ENCODE measurements at regions of chr4 and their contacts with region 1.

Region 1: GRCh38 chr4:140373328-140374129 is at the start of gene SCOC:
- DNase-seq: peak; percentile 94 to 98 (median 97)
- H3K4me3 ChIP-seq: peak within 1 kb of the TSS; percentile 88
- H3K4me3 Mint-ChIP-seq: peak within 1 kb of the TSS in 1 of 7 donors; percentile 82
- H3K27ac ChIP-seq: peak within 1 kb of the TSS; percentile 67
- H3K27ac Mint-ChIP-seq: peak within 1 kb of the TSS; percentile 11 to 86 (median 68)
- H3K4me1 ChIP-seq: peaks cover 21% of the 10 kb centered on the region
- H3K4me1 Mint-ChIP-seq: peaks cover 27 to 41% (median 32%) of the 10 kb centered on the region in 3 donors
- H3K27me3 ChIP-seq: no peaks in the 10 kb centered on the region
- H3K27me3 Mint-ChIP-seq: peaks cover 1 to 6% of the 10 kb centered on the region in 2 donors
- total RNA-seq, gene SCOC: 39.6 to 40.8 TPM

Region 2: GRCh38 chr4:140359562-140360427 is 13.7 kb before region 1 on chr4:
- CTCF ChIA-PET with region 1: interaction called, 68 read pairs
- POLR2A ChIA-PET with region 1: interaction called, 8 read pairs
- DNase-seq: peak; percentile 56 to 78 (median 63)
- H3K4me3 ChIP-seq: no peak overlapping the region
- H3K4me3 Mint-ChIP-seq: no peak overlapping the region
- H3K27ac ChIP-seq: no peak overlapping the region
- H3K27ac Mint-ChIP-seq: no peak overlapping the region
- H3K4me1 ChIP-seq: no peaks in the 10 kb centered on the region
- H3K4me1 Mint-ChIP-seq: peaks cover 0 to 3% (median 0%) of the 10 kb centered on the region in 3 donors
- H3K27me3 ChIP-seq: no peaks in the 10 kb centered on the region
- H3K27me3 Mint-ChIP-seq: peaks cover 11 to 20% of the 10 kb centered on the region in 2 donors

Region 3: GRCh38 chr4:140523857-140524742 is 150.6 kb after region 1 on chr4 and contains the start of gene ELMOD2:
- CTCF ChIA-PET with region 1: interaction called, 10 read pairs
- POLR2A ChIA-PET with region 1: interaction called, 18 read pairs
- DNase-seq: peak; percentile 97 to 98 (median 97)
- H3K4me3 ChIP-seq: peak within 1 kb of the TSS; percentile 72
- H3K4me3 Mint-ChIP-seq: peak within 1 kb of the TSS; percentile 84 to 94 (median 90)
- H3K27ac ChIP-seq: peak within 1 kb of the TSS; percentile 50
- H3K27ac Mint-ChIP-seq: peak within 1 kb of the TSS; percentile 34 to 93 (median 86)
- H3K4me1 ChIP-seq: peaks cover 16% of the 10 kb centered on the region
- H3K4me1 Mint-ChIP-seq: peaks cover 28 to 35% (median 30%) of the 10 kb centered on the region in 3 donors
- H3K27me3 ChIP-seq: no peaks in the 10 kb centered on the region
- H3K27me3 Mint-ChIP-seq: no peaks in the 10 kb centered on the region
- total RNA-seq, gene ELMOD2: 15.3 to 18.4 TPM

Measured in CD8-positive, alpha-beta memory T cell (primary cell).